IMR-90 (cell line): ENCODE measurements at regions of chr15 and their contacts with region 1.

Region 1: GRCh38 chr15:42650208-42651066 is 75.0 kb downstream of the STARD9 start:
- DNase-seq: peak; percentile 88
- ATAC-seq: peak; percentile 100
- H3K4me3 ChIP-seq: no peak overlapping the region
- H3K27ac ChIP-seq: no peak overlapping the region
- H3K4me1 ChIP-seq: no peaks in the 10 kb centered on the region
- H3K27me3 ChIP-seq: no peaks in the 10 kb centered on the region
- CTCF ChIP-seq: peak; percentile 87
- POLR2A ChIP-seq: no peak
- RAD21 ChIP-seq: peak; percentile 90

Region 2: DNA sequence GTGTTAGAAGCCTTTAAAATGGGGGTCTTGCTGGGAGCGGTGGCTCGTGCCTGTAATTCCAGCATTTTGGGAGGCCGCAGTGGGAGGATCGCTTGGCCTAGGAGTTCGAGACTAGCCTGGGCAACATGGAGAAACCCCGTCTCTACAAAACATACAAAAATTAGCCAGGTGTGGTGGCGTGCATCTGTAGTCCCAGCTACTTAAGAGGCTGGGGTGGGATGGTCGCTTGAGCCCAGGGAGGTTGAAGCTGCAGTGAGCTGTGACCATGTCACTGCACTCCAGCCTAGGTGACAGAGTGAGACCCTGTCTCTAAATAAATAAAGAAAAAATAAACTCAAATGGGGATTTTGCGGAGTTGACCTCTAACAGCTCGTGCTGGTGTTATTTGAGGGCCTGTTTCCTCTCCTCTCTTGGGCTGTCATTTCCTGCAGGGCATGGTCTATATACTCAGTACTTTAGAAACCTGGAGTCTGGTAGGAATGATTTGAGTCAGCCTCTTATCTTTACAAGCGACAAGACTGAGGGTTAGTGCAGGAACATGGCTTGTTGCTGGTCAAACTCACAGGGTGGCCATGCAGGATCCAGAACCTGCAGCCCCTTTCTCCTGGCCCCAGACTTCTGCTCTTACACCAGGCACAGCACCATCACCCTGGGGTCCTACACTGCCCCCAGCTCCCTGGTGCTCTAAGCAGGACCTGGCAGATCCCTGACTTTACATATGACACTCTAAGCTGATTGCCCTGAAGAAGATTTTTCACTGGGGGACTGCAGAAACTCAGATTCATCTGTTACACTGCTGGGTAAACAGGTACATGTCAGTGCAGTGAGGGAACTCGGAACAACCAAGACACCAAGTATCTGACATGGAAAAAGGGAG is 693.2 kb before region 1 on chr15:
- CTCF ChIA-PET with region 1: no interaction called
- POLR2A ChIA-PET with region 1: interaction called, 14 read pairs
- dilution Hi-C with region 1: no loop called
- in situ Hi-C with region 1: no loop called
- intact Hi-C with region 1: no loop called
- DNase-seq: peak; percentile 38
- ATAC-seq: peak; percentile 49
- H3K4me3 ChIP-seq: no peak overlapping the region
- H3K27ac ChIP-seq: no peak overlapping the region
- H3K4me1 ChIP-seq: peaks cover 14% of the 10 kb centered on the region
- H3K27me3 ChIP-seq: no peaks in the 10 kb centered on the region
- CTCF ChIP-seq: no peak
- POLR2A ChIP-seq: no peak
- RAD21 ChIP-seq: no peak

Region 3: GRCh38 chr15:42066764-42067415 is 583.5 kb before region 1 on chr15:
- CTCF ChIA-PET with region 1: no interaction called
- POLR2A ChIA-PET with region 1: no interaction called
- dilution Hi-C with region 1: no loop called
- in situ Hi-C with region 1: no loop called
- intact Hi-C with region 1: loop called (anchors 2 kb)
- DNase-seq: no peak
- ATAC-seq: no peak
- H3K4me3 ChIP-seq: no peak overlapping the region
- H3K27ac ChIP-seq: no peak overlapping the region
- H3K4me1 ChIP-seq: 0 out of 2 replicates have a peak, but pooled peaks cover 2% of the 10 kb centered on the region
- H3K27me3 ChIP-seq: peaks cover 53% of the 10 kb centered on the region
- CTCF ChIP-seq: no peak
- POLR2A ChIP-seq: no peak
- RAD21 ChIP-seq: no peak

Region 4: DNA sequence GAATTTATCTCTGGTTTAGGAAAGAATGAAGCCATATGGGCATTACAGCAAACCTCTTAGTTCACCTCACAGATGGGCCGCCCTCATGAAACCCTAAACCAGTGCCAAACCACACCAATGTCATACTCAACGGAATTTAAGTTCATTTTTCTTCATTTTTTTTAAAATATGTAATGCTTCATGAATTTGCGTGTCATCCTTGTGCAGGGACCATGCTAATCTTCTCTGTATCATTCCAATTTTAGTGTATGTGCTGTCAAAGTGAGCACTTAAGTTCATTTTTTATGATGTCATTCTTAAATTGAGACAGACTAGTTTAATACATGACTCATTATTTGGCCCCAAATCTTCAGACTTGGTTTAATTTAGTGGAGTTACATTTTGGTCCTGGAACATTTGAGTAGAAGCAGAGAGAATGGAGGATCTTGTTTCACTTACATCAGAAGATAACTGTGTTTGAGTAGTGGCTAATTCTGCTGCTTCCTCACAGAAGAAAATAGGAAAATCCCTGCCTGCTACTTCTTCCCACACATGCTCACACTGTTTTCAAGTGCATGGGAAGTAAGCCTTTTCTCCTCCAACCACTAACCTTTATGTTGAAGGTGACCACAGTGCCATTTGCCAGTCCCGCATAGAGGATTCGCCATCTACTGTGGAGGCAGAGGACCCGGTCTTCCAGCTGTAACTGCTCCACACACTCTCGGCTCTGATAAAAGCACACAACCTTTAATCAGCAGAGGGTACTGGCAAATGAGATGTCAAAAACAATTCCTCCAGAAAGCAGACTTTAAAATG is 222.8 kb before region 1 on chr15:
- CTCF ChIA-PET with region 1: no interaction called
- POLR2A ChIA-PET with region 1: no interaction called
- dilution Hi-C with region 1: no loop called
- in situ Hi-C with region 1: no loop called
- intact Hi-C with region 1: loop called (anchors 5 kb)
- DNase-seq: peak; percentile 95
- ATAC-seq: peak; percentile 81
- H3K4me3 ChIP-seq: no peak overlapping the region
- H3K27ac ChIP-seq: peak overlapping the region; percentile 66; the same call in 1 of the 2 replicates
- H3K4me1 ChIP-seq: peaks cover 3% of the 10 kb centered on the region
- H3K27me3 ChIP-seq: no peaks in the 10 kb centered on the region
- CTCF ChIP-seq: no peak
- POLR2A ChIP-seq: no peak
- RAD21 ChIP-seq: no peak

Region 5: GRCh38 chr15:42548253-42549031 is 102.0 kb before region 1 on chr15 and contains the starts of genes HAUS2 and LRRC57:
- CTCF ChIA-PET with region 1: no interaction called
- POLR2A ChIA-PET with region 1: no interaction called
- dilution Hi-C with region 1: no loop called
- in situ Hi-C with region 1: no loop called
- intact Hi-C with region 1: loop called (anchors 1 kb)
- DNase-seq: peak; percentile 78
- ATAC-seq: peak; percentile 93
- H3K4me3 ChIP-seq: peak within 1 kb of the TSS; percentile 85
- H3K27ac ChIP-seq: peak within 1 kb of the TSS; percentile 84
- H3K4me1 ChIP-seq: peaks cover 6% of the 10 kb centered on the region
- H3K27me3 ChIP-seq: no peaks in the 10 kb centered on the region
- CTCF ChIP-seq: no peak
- POLR2A ChIP-seq: peak; percentile 73
- RAD21 ChIP-seq: no peak
- total RNA-seq, gene HAUS2: 22.4 and 29.2 TPM in 2 replicates
- total RNA-seq, gene LRRC57: 9.5 and 10.0 TPM in 2 replicates

Region 6: DNA sequence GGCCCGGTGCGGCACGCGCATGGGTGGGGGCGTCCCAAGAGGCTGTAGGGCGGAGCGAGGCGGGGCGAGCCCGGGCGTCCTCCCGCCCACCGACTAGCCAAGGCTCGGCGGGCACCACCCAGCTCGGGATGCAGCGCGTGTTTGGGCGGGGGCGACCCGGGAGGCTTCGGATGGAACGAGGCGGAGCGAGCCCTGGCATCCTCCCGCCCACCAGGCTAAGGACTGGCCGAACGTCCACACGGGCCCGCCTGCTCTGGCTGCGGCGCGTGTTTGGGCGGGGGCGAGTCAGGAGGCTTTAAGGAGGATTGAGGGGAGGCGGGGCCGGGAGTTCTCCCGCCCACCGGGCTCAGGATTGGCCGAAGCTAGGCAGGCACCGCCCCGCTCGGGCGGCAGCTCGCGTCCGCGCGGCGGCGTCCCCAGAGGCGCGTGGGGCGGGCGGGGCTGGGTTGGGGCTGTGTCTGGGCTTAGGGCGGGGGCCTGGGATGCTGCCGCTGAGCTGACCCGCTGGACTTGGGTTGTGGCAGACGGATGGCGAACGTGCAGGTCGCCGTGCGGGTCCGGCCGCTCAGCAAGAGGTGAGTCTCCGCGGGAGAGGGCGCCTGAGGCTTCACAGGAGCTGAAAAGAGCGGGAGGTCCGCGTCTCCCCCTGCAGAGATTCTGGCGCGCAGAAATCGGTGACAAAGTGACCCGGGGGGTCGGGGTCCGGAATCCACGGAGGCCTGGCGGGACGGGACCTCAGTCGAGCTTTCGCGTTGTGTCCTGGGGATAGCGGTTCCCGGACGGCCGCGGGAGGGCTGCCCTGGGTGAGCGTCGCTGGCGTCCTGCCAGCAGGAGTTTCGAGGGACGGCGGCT is 75.0 kb before region 1 on chr15 and contains the start of gene STARD9:
- CTCF ChIA-PET with region 1: no interaction called
- POLR2A ChIA-PET with region 1: no interaction called
- dilution Hi-C with region 1: no loop called
- in situ Hi-C with region 1: no loop called
- intact Hi-C with region 1: loop called (anchors 5 kb)
- DNase-seq: peak; percentile 97
- ATAC-seq: peak; percentile 95
- H3K4me3 ChIP-seq: peak within 1 kb of the TSS; percentile 83
- H3K27ac ChIP-seq: peak within 1 kb of the TSS; percentile 58
- H3K4me1 ChIP-seq: peaks cover 3% of the 10 kb centered on the region; the same call in 1 of the 2 replicates
- H3K27me3 ChIP-seq: no peaks in the 10 kb centered on the region
- CTCF ChIP-seq: no peak
- POLR2A ChIP-seq: peak; percentile 29; the same call in 1 of the 2 replicates
- RAD21 ChIP-seq: no peak
- total RNA-seq, gene STARD9: 3.1 and 3.2 TPM in 2 replicates